ENCODE measurements at regions of chr1 and their contacts with region 1.

Region 1: GRCh38 chr1:23598424-23598823 is 39.1 kb upstream of the ID3 start:
- DNase-seq: no peak
- ATAC-seq: no peak
- H3K4me3 ChIP-seq: no peak overlapping the region
- H3K4me3 Mint-ChIP-seq: no peak overlapping the region
- H3K27ac ChIP-seq: peak overlapping the region in 1 of 2 donors; percentile 2
- H3K27ac Mint-ChIP-seq: peak overlapping the region; percentile 78
- H3K4me1 ChIP-seq: peaks cover 96% of the 10 kb centered on the region
- H3K4me1 Mint-ChIP-seq: peaks cover 88% of the 10 kb centered on the region
- H3K27me3 ChIP-seq: no peaks in the 10 kb centered on the region
- H3K27me3 Mint-ChIP-seq: no peaks in the 10 kb centered on the region
- CTCF ChIP-seq: no peak

Region 2: GRCh38 chr1:23585447-23586015 is 12.9 kb before region 1 on chr1:
- CTCF ChIA-PET with region 1: no interaction called
- POLR2A ChIA-PET with region 1: interaction called, 7 read pairs
- intact Hi-C with region 1: loop called in 1 of 2 experiments (anchors 2 kb)
- DNase-seq: peak in 2 of 14 experiments; percentile 40 to 54
- ATAC-seq: no peak
- H3K4me3 ChIP-seq: no peak overlapping the region
- H3K4me3 Mint-ChIP-seq: no peak overlapping the region
- H3K27ac ChIP-seq: no peak overlapping the region
- H3K27ac Mint-ChIP-seq: no peak overlapping the region
- H3K4me1 ChIP-seq: peaks cover 4% of the 10 kb centered on the region
- H3K4me1 Mint-ChIP-seq: peaks cover 19% of the 10 kb centered on the region
- H3K27me3 ChIP-seq: no peaks in the 10 kb centered on the region
- H3K27me3 Mint-ChIP-seq: no peaks in the 10 kb centered on the region
- CTCF ChIP-seq: no peak

Region 3: DNA sequence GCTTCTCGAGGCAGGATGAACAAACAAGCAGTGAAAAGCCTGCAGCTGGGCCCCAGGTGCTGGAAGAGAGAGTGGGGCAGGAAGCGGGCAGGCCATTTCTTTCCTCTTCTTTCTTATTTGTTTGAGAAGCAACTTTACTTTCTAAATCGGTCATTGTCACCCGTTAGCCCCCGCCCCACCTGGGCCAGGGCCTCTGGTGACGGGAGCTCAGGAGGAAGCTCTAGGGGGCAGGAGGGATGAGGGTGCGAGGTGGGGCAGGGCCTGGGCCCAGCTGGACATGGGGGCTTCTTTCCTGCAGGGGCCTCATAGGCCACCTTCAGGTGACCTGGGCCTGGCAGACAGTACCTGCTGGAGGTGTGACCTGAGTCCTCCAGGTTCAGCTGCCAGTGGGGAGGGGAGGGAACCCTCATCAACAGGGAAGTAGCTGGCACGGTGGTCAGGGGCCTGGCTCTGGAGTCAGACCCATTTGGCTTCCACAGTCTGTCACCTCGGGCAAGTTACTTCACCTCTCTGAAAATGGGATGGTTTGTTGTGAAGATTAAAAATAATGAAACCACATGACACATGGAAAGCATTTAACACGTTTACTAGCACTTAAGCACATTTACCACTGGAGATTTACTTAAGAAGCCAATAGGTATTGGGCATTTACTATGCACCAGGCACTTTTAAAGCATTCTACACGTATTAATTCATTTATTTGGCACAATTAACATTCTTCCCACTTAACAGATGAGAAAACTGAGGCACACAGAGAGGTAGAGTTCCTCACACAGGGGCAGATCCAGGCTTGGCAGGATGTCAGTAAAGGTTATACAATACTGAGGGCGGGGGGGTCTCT is 15.0 kb after region 1 on chr1:
- CTCF ChIA-PET with region 1: interaction called, 4 read pairs
- POLR2A ChIA-PET with region 1: interaction called, 176 read pairs
- intact Hi-C with region 1: no loop called
- DNase-seq: peak in 13 of 14 experiments; percentile 27 to 85 (median 60)
- ATAC-seq: peak; percentile 54
- H3K4me3 ChIP-seq: no peak overlapping the region
- H3K4me3 Mint-ChIP-seq: peak overlapping the region; percentile 51
- H3K27ac ChIP-seq: peak overlapping the region; percentile 71 to 72
- H3K27ac Mint-ChIP-seq: peak overlapping the region; percentile 97
- H3K4me1 ChIP-seq: peaks cover 73% of the 10 kb centered on the region
- H3K4me1 Mint-ChIP-seq: peaks cover 84% of the 10 kb centered on the region
- H3K27me3 ChIP-seq: no peaks in the 10 kb centered on the region
- H3K27me3 Mint-ChIP-seq: no peaks in the 10 kb centered on the region
- CTCF ChIP-seq: no peak

Region 4: GRCh38 chr1:23619299-23620188 is 21.1 kb after region 1 on chr1:
- CTCF ChIA-PET with region 1: interaction called, 4 read pairs
- POLR2A ChIA-PET with region 1: interaction called, 176 read pairs
- intact Hi-C with region 1: loop called in 1 of 2 experiments (anchors 1 kb)
- DNase-seq: peak; percentile 75 to 96 (median 89)
- ATAC-seq: peak; percentile 87
- H3K4me3 ChIP-seq: peak overlapping the region; percentile 62
- H3K4me3 Mint-ChIP-seq: peak overlapping the region; percentile 78
- H3K27ac ChIP-seq: peak overlapping the region; percentile 77 to 82
- H3K27ac Mint-ChIP-seq: peak overlapping the region; percentile 97
- H3K4me1 ChIP-seq: peaks cover 88% of the 10 kb centered on the region
- H3K4me1 Mint-ChIP-seq: peaks cover 94% of the 10 kb centered on the region
- H3K27me3 ChIP-seq: no peaks in the 10 kb centered on the region
- H3K27me3 Mint-ChIP-seq: no peaks in the 10 kb centered on the region
- CTCF ChIP-seq: no peak

Region 5: GRCh38 chr1:23627069-23627735 is 28.8 kb after region 1 on chr1:
- CTCF ChIA-PET with region 1: no interaction called
- POLR2A ChIA-PET with region 1: interaction called, 176 read pairs
- intact Hi-C with region 1: loop called (anchors 1 to 5 kb)
- DNase-seq: peak in 6 of 14 experiments; percentile 30 to 69 (median 62)
- ATAC-seq: peak; percentile 76
- H3K4me3 ChIP-seq: peak overlapping the region; percentile 72
- H3K4me3 Mint-ChIP-seq: peak overlapping the region; percentile 93
- H3K27ac ChIP-seq: peak overlapping the region; percentile 55 to 73
- H3K27ac Mint-ChIP-seq: peak overlapping the region; percentile 94
- H3K4me1 ChIP-seq: peaks cover 57% of the 10 kb centered on the region
- H3K4me1 Mint-ChIP-seq: peaks cover 66% of the 10 kb centered on the region
- H3K27me3 ChIP-seq: no peaks in the 10 kb centered on the region
- H3K27me3 Mint-ChIP-seq: no peaks in the 10 kb centered on the region
- CTCF ChIP-seq: no peak

Measured in CD4-positive, alpha-beta T cell (primary cell).